ENCODE measurements at regions of chr12 and their contacts with region 1.

Region 1: DNA sequence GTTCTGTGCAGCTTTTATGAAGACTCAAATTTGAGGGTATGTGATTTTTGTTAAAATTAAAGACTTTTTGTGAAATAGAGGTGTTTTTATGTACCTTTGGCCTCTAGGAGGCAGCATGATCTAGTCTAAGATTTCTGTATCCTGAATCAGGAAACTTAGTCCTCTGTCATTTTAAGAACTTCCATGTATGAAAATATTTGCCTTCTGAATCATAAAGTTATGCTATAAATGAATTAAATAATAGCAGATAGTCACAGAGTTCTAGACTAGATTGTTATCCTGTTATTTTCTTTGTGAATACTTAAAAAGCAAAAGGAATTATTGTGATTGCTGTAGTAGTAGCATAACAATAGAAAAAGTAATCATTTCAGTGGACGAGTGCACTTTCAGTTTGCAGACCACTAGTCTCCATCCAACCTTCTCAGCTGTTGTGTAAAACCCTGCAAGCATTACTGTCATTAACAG is 56.3 kb downstream of the FGD4 start:
- DNase-seq: peak; percentile 31 to 62 (median 39)
- ATAC-seq: peak; percentile 54; the same call in 1 of the 3 replicates
- H3K4me3 ChIP-seq: no peak overlapping the region
- H3K27ac ChIP-seq: no peak overlapping the region
- H3K4me1 ChIP-seq: no peaks in the 10 kb centered on the region
- H3K27me3 ChIP-seq: peaks cover 0 to 2% of the 10 kb centered on the region in 2 experiments; a peak in 1 of 5 replicates
- CTCF ChIP-seq: peak; percentile 35 to 78 (median 51); a peak in 4 of 6 replicates
- EP300 ChIP-seq: no peak
- POLR2A ChIP-seq: no peak
- RAD21 ChIP-seq: peak; percentile 82 to 85

Region 2: DNA sequence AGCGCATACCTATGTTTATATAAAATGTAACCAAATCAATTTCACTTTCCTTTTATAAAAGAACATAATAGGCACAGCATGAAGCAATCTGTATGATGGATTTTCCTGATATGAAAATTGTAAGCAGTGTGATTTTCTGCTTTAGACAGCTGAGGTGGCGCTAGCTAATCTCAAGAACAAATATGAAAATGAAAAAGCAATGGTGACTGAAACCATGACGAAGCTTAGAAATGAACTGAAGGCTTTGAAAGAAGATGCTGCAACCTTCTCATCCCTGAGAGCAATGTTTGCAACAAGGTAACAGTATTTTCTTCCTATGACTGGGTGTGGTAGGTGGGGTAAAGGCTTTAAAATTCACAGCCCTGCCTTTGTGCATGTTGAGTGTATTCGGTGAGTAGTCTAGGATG is 121.3 kb before region 1 on chr12:
- CTCF ChIA-PET with region 1: no interaction called
- POLR2A ChIA-PET with region 1: no interaction called
- in situ Hi-C with region 1: no loop called
- intact Hi-C with region 1: no loop called
- DNase-seq: no peak
- ATAC-seq: no peak
- H3K4me3 ChIP-seq: no peak overlapping the region
- H3K27ac ChIP-seq: no peak overlapping the region
- H3K4me1 ChIP-seq: no peaks in the 10 kb centered on the region
- H3K27me3 ChIP-seq: no peaks in the 10 kb centered on the region
- CTCF ChIP-seq: no peak
- EP300 ChIP-seq: no peak
- POLR2A ChIP-seq: no peak
- RAD21 ChIP-seq: no peak

Region 3: DNA sequence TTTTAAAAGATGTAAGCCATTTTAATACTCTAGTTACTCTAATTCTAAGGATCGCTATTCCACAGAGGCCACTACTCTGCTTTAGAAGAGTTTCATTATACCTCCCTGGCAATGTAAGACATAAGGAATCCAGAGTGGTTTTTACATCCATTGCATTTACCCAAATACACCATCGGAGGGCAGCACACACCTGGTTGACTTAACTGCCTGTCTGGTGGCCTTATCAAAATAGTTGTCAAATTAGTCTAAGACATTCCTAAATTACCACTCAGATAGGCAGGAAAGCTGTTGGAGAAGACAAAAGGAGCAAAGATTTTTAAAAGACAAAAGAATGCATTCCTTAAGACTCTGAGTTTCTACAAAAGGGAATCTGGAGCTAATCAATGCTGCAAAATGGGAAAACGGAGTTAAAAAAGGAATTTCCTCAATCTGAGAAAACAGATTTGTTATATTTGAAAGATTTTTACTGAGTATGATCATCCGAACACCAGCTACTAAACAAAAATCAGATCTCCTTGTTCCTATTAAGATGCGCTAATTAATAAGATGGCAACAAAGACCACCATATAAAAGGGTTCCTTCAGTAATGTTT is 90.1 kb before region 1 on chr12:
- CTCF ChIA-PET with region 1: no interaction called
- POLR2A ChIA-PET with region 1: no interaction called
- in situ Hi-C with region 1: no loop called
- intact Hi-C with region 1: loop called (anchors 5 kb)
- DNase-seq: peak; percentile 60 to 75 (median 70)
- ATAC-seq: peak; percentile 90
- H3K4me3 ChIP-seq: no peak overlapping the region
- H3K27ac ChIP-seq: no peak overlapping the region
- H3K4me1 ChIP-seq: no peaks in the 10 kb centered on the region
- H3K27me3 ChIP-seq: no peaks in the 10 kb centered on the region; a peak in 1 of 5 replicates
- CTCF ChIP-seq: peak; percentile 75 to 82 (median 78)
- EP300 ChIP-seq: no peak
- POLR2A ChIP-seq: no peak
- RAD21 ChIP-seq: peak; percentile 83 to 89

Region 4: GRCh38 chr12:32437095-32437515 is 18.5 kb before region 1 on chr12:
- CTCF ChIA-PET with region 1: no interaction called
- POLR2A ChIA-PET with region 1: no interaction called
- in situ Hi-C with region 1: no loop called
- intact Hi-C with region 1: no loop called
- DNase-seq: no peak
- ATAC-seq: peak; percentile 42; the same call in 1 of the 3 replicates
- H3K4me3 ChIP-seq: no peak overlapping the region
- H3K27ac ChIP-seq: no peak overlapping the region
- H3K4me1 ChIP-seq: no peaks in the 10 kb centered on the region
- H3K27me3 ChIP-seq: peaks cover 27 to 41% of the 10 kb centered on the region in 2 experiments; a peak in 4 of 5 replicates
- CTCF ChIP-seq: no peak
- EP300 ChIP-seq: no peak
- POLR2A ChIP-seq: no peak
- RAD21 ChIP-seq: no peak

Region 5: DNA sequence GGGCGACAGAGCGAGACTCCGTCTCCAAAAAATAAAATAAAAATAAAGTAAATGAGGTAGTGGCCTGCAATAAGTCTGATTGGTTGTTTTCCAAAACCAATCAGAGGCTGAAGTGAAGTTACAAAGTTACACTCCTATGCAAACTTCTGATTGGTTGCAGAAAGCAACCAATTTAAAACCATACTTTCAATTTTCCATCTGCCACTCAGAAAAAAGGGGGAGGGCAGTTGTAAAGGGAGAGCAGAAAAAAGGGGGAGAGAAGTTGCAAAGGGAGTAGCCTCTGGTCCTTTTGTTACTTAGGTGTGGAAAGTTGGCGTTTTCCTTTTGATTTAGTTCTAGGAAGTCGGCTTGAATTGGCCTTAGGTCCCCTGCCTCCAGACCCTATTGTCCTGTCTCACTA is 210.9 kb after region 1 on chr12:
- CTCF ChIA-PET with region 1: interaction called, 3 read pairs
- POLR2A ChIA-PET with region 1: no interaction called
- in situ Hi-C with region 1: loop called (anchors 5 kb)
- intact Hi-C with region 1: no loop called
- DNase-seq: no peak
- ATAC-seq: no peak
- H3K4me3 ChIP-seq: no peak overlapping the region
- H3K27ac ChIP-seq: no peak overlapping the region
- H3K4me1 ChIP-seq: no peaks in the 10 kb centered on the region
- H3K27me3 ChIP-seq: peaks cover 4 to 6% of the 10 kb centered on the region in 2 experiments; a peak in 3 of 5 replicates
- CTCF ChIP-seq: no peak
- EP300 ChIP-seq: no peak
- POLR2A ChIP-seq: no peak
- RAD21 ChIP-seq: no peak

Region 6: DNA sequence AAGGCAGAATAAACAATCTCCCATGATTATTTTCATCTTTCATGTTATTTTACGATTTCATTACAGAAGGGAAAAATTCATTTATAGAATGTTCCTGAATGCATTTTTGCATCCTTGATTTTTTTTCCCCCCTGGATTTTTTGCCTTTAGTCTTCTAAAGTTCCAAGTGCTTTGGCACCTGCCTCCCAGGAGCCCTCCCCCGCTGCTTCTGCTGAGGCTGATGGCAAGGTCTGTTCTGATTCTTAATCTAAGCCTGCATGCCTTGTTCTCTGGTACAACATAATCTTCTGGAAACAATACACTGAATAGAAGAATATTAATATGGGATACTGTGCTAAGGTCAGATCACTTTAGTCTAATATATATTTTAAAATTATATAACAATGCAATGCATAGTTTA is 282.1 kb after region 1 on chr12:
- CTCF ChIA-PET with region 1: no interaction called
- POLR2A ChIA-PET with region 1: no interaction called
- in situ Hi-C with region 1: no loop called
- intact Hi-C with region 1: loop called (anchors 5 kb)
- DNase-seq: no peak
- ATAC-seq: no peak
- H3K4me3 ChIP-seq: no peak overlapping the region
- H3K27ac ChIP-seq: no peak overlapping the region
- H3K4me1 ChIP-seq: no peaks in the 10 kb centered on the region
- H3K27me3 ChIP-seq: no peaks in the 10 kb centered on the region
- CTCF ChIP-seq: no peak
- EP300 ChIP-seq: no peak
- POLR2A ChIP-seq: no peak
- RAD21 ChIP-seq: no peak

Region 7: DNA sequence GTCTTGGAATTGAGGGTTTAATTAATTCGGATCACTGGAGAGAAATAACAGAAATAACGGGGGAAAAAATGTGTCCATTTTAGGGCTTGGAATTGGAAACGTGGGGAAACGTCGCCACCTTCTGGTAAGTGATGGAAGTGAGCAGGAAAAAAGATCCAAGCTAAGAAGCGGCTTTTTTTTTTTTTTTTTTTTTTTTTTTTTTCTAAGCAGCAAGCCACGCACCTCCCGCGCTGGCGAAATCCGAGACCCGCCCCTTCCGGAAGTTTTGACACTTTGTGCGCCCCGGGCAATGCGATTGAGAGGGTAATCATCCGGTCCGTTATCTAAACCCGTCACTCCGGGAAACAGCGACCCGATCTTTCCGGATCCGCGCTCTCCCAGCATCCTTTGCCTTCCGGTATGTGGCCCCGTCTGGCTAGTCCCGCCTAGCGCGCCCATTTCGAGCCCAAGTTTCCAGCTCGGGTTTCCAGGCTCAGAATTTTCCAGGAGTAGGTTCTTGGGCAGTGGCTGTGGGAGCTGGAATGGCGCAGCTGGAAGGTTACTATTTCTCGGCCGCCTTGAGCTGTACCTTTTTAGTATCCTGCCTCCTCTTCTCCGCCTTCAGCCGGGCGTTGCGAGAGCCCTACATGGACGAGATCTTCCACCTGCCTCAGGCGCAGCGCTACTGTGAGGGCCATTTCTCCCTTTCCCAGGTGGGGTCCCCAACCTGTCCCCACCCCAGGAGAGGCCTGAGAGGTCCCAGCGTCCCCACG is 1566.6 kb after region 1 on chr12 and contains the start of gene ALG10:
- CTCF ChIA-PET with region 1: interaction called, 8 read pairs
- POLR2A ChIA-PET with region 1: no interaction called
- in situ Hi-C with region 1: loop called (anchors 10 kb)
- intact Hi-C with region 1: loop called (anchors 10 kb)
- DNase-seq: peak; percentile 77 to 97 (median 80)
- ATAC-seq: peak; percentile 100
- H3K4me3 ChIP-seq: peak within 1 kb of the TSS; percentile 82
- H3K27ac ChIP-seq: peak within 1 kb of the TSS; percentile 91
- H3K4me1 ChIP-seq: peaks cover 0 to 4% of the 10 kb centered on the region in 2 experiments; a peak in 1 of 5 replicates
- H3K27me3 ChIP-seq: no peaks in the 10 kb centered on the region
- CTCF ChIP-seq: peak; percentile 46 to 80 (median 56)
- EP300 ChIP-seq: peak; percentile 48
- POLR2A ChIP-seq: peak; percentile 66
- RAD21 ChIP-seq: peak; percentile 58 to 71
- polyA plus RNA-seq, gene ALG10: 2.4 to 3.4 TPM